Ascending aorta (tissue), 2 donors: ENCODE measurements at regions of chr7 and their contacts with region 1.

Region 1: DNA sequence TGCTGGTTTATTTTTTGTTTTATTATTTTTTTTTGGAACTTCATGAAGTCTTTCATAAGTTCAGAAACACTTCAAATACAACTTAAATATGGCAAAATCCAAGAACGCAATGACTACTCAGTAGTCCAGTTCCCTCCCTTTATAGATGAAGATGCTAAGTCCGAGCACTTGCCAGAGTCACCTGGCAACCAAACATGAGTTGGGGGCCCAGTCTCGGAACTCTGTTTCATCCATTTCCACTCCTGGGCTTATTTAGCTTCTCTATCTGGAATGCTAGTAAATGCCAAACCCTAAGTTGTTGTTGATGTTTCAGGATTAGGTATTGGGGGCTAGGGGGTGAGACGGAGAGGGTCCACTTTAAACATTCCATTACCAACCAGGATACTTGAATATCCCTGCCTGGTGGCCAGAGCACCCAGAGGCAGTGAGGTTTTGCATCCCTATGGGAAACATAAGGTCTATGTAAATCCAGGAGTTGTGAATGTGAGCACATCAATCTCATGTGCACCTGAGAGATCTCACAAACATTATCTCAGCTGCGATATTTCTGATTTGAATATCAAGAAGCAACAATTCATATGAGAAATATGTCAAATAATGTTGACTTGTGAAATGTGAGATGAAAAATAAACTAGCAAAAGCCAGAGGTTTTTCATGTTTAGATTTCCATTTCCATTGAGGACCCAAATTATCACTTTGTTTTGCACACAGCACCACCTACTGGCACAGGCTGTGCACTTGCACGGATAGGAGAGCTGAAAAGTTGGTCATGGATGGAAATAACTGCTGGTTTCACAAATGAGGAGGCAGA is 129.3 kb downstream of the PKD1L1 start:
- DNase-seq: peak in 1 of 2 donors; percentile 87
- H3K4me3 ChIP-seq: no peak overlapping the region
- H3K27ac ChIP-seq: peak overlapping the region in 1 of 2 donors; percentile 21
- H3K4me1 ChIP-seq: peaks cover 3 to 8% of the 10 kb centered on the region in 2 donors
- H3K27me3 ChIP-seq: no peaks in the 10 kb centered on the region
- CTCF ChIP-seq: peak; percentile 86 to 91 (median 90)

Region 2: GRCh38 chr7:47392231-47392759 is 426.7 kb before region 1 on chr7:
- intact Hi-C with region 1: loop called (anchors 5 kb)
- DNase-seq: peak in 1 of 2 donors; percentile 84
- H3K4me3 ChIP-seq: peak overlapping the region in 1 of 2 donors; percentile 31
- H3K27ac ChIP-seq: peak overlapping the region in 1 of 2 donors; percentile 32
- H3K4me1 ChIP-seq: peaks cover 0 to 3% of the 10 kb centered on the region in 2 donors
- H3K27me3 ChIP-seq: no peaks in the 10 kb centered on the region
- CTCF ChIP-seq: peak; percentile 46 to 73 (median 63)

Region 3: DNA sequence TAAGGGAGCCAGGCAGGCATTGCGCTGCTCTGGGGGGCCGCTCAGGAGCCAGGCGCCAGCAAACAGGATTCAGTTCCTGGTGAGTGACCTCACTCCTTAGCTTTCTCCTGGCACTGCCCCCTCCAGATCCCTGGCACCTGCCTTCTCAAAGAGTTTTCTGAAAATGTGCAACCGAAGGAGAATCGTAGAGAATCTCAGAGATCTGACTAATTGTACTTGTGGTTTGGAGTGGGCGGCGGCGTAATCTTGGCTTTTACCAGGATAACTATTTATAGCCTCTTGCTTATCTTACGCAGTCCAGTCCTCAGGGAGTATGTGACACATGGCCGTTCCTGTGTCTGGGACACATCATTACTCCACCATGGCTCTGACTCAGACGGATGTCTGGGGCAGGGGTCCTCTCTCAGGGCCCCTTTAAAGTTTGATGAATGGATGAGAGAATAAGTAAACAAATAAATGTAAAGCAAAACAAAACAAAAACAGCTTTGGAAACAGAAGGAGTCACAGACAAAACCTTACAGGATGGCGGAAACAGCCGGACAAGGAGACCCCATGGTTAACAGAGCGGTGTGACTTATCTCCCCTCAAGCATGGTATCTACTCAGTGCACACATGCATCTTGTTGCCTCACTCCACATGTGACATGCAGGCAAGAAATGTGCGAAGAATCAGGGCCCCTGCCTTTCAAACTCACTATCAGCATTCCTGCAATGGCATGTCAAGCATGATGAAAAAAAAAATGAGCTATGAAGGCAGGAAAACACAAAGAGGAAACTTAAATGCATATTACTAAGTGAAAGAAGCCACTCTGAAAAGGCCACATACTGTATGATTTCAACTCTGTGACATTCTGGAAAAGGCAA is 336.8 kb before region 1 on chr7:
- intact Hi-C with region 1: loop called (anchors 5 kb)
- DNase-seq: peak; percentile 56 to 87
- H3K4me3 ChIP-seq: peak overlapping the region in 1 of 2 donors; percentile 37
- H3K27ac ChIP-seq: peak overlapping the region; percentile 82 to 85
- H3K4me1 ChIP-seq: peaks cover 19 to 66% of the 10 kb centered on the region in 2 donors
- H3K27me3 ChIP-seq: no peaks in the 10 kb centered on the region
- CTCF ChIP-seq: no peak

Region 4: GRCh38 chr7:47669061-47669891 is 149.7 kb before region 1 on chr7:
- intact Hi-C with region 1: loop called (anchors 10 kb)
- DNase-seq: peak; percentile 74 to 92
- H3K4me3 ChIP-seq: peak overlapping the region; percentile 4 to 43
- H3K27ac ChIP-seq: peak overlapping the region; percentile 47 to 71
- H3K4me1 ChIP-seq: peaks cover 7 to 19% of the 10 kb centered on the region in 2 donors
- H3K27me3 ChIP-seq: no peaks in the 10 kb centered on the region
- CTCF ChIP-seq: peak in 1 of 3 experiments; percentile 13

Region 5: GRCh38 chr7:47757921-47758411 is 61.0 kb before region 1 on chr7:
- intact Hi-C with region 1: loop called (anchors 5 kb)
- DNase-seq: peak; percentile 63 to 93
- H3K4me3 ChIP-seq: no peak overlapping the region
- H3K27ac ChIP-seq: peak overlapping the region; percentile 70 to 86
- H3K4me1 ChIP-seq: peaks cover 0 to 12% of the 10 kb centered on the region in 2 donors
- H3K27me3 ChIP-seq: no peaks in the 10 kb centered on the region
- CTCF ChIP-seq: no peak

Region 6: GRCh38 chr7:47786557-47787248 is 32.3 kb before region 1 on chr7:
- intact Hi-C with region 1: loop called (anchors 2 kb)
- DNase-seq: peak; percentile 15 to 88
- H3K4me3 ChIP-seq: no peak overlapping the region
- H3K27ac ChIP-seq: peak overlapping the region; percentile 86 to 91
- H3K4me1 ChIP-seq: peaks cover 13 to 49% of the 10 kb centered on the region in 2 donors
- H3K27me3 ChIP-seq: no peaks in the 10 kb centered on the region
- CTCF ChIP-seq: no peak